Thyroid gland (tissue), 4 donors: ENCODE measurements at regions of chr14 and their contacts with region 1.

Region 1: GRCh38 chr14:99271951-99272631 is at the start of gene BCL11B:
- DNase-seq: peak; percentile 91
- H3K4me3 ChIP-seq: peak within 1 kb of the TSS; percentile 43 to 58 (median 47)
- H3K27ac ChIP-seq: peak within 1 kb of the TSS in 2 of 3 donors; percentile 20 to 49
- H3K4me1 ChIP-seq: peaks cover 23 to 30% of the 10 kb centered on the region in 2 donors
- H3K27me3 ChIP-seq: no peaks in the 10 kb centered on the region
- CTCF ChIP-seq: peak; percentile 11 to 69 (median 50)
- POLR2A ChIP-seq: peak in 1 of 2 donors; percentile 48
- total RNA-seq, gene BCL11B: 0.81 to 4.3 (median 2.3) TPM

Region 2: GRCh38 chr14:97978341-97978740 is 1293.8 kb before region 1 on chr14:
- intact Hi-C with region 1: loop called (anchors 10 kb)
- DNase-seq: peak; percentile 89 to 94
- H3K4me3 ChIP-seq: no peak overlapping the region
- H3K27ac ChIP-seq: peak overlapping the region; percentile 75 to 96 (median 82)
- H3K4me1 ChIP-seq: peaks cover 10 to 15% of the 10 kb centered on the region in 2 donors
- H3K27me3 ChIP-seq: no peaks in the 10 kb centered on the region
- CTCF ChIP-seq: peak in 4 of 6 experiments; percentile 6 to 60 (median 38)
- POLR2A ChIP-seq: no peak